Activated B cell treated with CpG ODN at 0.5 μM for 24 hours (primary cell): ENCODE measurements at regions of chr2 and their contacts with region 1.

Region 1: DNA sequence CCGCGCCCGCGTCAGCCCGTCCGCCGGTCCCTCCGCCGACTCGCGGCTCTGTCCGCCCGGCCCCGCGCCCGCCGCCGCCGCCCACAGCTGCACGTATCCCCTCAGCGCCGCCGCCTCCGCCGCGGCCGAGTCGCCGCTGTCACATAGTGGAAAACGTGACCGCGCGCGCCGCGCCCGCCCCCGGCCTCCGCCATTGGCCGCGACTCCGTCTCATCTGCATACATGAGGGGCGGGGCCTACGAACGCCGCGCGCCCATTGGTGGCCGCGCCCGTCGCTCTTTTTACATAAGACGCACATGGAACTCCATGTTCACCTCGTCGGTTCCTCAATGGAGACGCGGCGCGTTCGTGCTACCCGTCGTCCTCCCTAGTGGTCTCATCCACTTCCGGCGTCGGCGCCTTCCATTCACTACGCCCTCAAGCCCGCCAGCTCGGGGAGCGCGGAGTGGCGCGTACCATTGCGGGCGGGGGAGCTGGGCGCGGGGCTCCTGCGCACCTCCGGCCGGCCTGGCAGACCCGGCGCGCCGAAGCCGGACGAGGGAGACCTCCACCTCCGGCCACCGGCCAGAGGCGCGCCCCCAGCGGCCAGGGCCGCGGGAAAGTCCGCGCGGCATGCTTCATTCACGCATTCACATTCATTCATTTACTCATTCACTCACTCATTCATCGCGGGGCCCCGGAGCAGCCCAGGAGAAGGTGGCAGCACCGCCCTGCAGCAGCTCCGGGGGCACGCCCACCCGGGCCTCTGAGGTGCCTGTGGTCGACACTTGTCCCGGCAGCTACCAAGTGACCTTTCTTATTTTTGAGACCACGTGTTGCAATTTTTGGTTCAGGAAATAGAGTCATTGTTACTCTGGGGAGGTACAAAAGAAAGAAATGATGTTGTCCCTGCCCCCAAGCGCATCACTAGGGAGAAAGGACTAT is 502 bp upstream of the PER2 start:
- DNase-seq: peak; percentile 95
- ATAC-seq: peak; percentile 87
- H3K4me3 Mint-ChIP-seq: peak overlapping the region; percentile 93
- H3K27ac Mint-ChIP-seq: peak overlapping the region; percentile 94
- H3K4me1 Mint-ChIP-seq: peaks cover 34% of the 10 kb centered on the region
- H3K27me3 Mint-ChIP-seq: no peaks in the 10 kb centered on the region
- CTCF ChIP-seq: no peak

Region 2: GRCh38 chr2:237474931-237475703 is 813.8 kb before region 1 on chr2:
- CTCF ChIA-PET with region 1: no interaction called
- POLR2A ChIA-PET with region 1: interaction called, 4 read pairs
- intact Hi-C with region 1: loop called (anchors 1 kb)
- DNase-seq: peak; percentile 89
- ATAC-seq: peak; percentile 91
- H3K4me3 Mint-ChIP-seq: peak overlapping the region; percentile 87
- H3K27ac Mint-ChIP-seq: peak overlapping the region; percentile 84
- H3K4me1 Mint-ChIP-seq: peaks cover 8% of the 10 kb centered on the region
- H3K27me3 Mint-ChIP-seq: peaks cover 30% of the 10 kb centered on the region
- CTCF ChIP-seq: peak; percentile 27

Region 3: GRCh38 chr2:238097998-238098871 is 190.7 kb before region 1 on chr2:
- CTCF ChIA-PET with region 1: no interaction called
- POLR2A ChIA-PET with region 1: no interaction called
- intact Hi-C with region 1: loop called (anchors 2 kb)
- DNase-seq: no peak
- ATAC-seq: peak; percentile 98
- H3K4me3 Mint-ChIP-seq: peak overlapping the region; percentile 72
- H3K27ac Mint-ChIP-seq: peak overlapping the region; percentile 76
- H3K4me1 Mint-ChIP-seq: peaks cover 19% of the 10 kb centered on the region
- H3K27me3 Mint-ChIP-seq: no peaks in the 10 kb centered on the region
- CTCF ChIP-seq: no peak

Region 4: GRCh38 chr2:238239872-238240751 is 48.8 kb before region 1 on chr2 and contains the start of gene HES6:
- CTCF ChIA-PET with region 1: no interaction called
- POLR2A ChIA-PET with region 1: interaction called, 3 read pairs
- intact Hi-C with region 1: loop called (anchors 1 kb)
- DNase-seq: peak; percentile 77
- ATAC-seq: peak; percentile 86
- H3K4me3 Mint-ChIP-seq: peak within 1 kb of the TSS; percentile 86
- H3K27ac Mint-ChIP-seq: peak within 1 kb of the TSS; percentile 68
- H3K4me1 Mint-ChIP-seq: peaks cover 13% of the 10 kb centered on the region
- H3K27me3 Mint-ChIP-seq: peaks cover 12% of the 10 kb centered on the region
- CTCF ChIP-seq: no peak
- total RNA-seq, gene HES6: 4.4 and 5.0 TPM in 2 replicates

Region 5: DNA sequence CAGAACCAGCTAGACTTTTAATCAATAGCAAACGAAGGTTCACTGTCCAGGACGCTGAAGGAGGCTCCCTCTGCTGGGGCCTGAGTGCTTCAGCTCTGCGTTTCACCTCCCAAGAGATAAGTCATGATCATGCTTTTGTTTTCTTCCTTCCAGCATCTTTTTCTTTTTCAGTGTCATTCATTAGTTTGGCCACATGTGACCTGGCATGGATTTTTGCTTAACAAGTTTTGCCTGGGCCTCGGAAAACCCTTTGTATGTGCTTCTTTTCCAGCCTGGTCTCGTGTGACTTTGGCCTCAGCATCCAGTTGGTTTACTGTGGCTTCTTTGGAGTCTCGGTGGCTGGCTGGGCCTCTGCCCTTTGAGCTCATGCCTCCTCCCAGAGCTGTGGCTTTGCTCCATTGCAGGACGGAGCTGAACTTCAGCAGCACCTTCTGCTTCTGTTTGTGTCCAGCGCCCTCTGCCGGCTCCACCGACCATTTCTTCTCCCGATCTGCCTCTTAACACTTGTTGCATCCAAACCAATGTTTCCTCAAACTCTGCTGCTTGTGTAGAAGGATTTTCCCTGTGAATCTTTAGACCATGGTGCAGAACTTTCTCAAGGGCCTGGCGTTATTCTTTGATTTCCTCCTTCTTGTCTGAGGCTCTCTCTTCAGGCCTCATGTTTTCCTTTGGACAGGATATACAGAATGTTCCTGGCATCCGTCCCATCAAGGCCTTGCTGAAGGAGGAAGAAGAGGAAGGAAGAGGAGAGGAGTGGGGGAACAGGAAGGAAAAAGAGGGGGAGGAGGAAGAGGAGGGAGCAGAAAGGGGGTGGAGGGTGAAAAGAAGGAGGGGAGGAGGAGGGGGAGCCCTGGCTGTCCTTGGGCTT is 25.5 kb before region 1 on chr2:
- CTCF ChIA-PET with region 1: no interaction called
- POLR2A ChIA-PET with region 1: interaction called, 3 read pairs
- intact Hi-C with region 1: loop called (anchors 2 kb)
- DNase-seq: peak; percentile 53
- ATAC-seq: peak; percentile 57
- H3K4me3 Mint-ChIP-seq: no peak overlapping the region
- H3K27ac Mint-ChIP-seq: no peak overlapping the region
- H3K4me1 Mint-ChIP-seq: peaks cover 3% of the 10 kb centered on the region
- H3K27me3 Mint-ChIP-seq: no peaks in the 10 kb centered on the region
- CTCF ChIP-seq: peak; percentile 54

Region 6: GRCh38 chr2:238426568-238427434 is 137.9 kb after region 1 on chr2 and contains the start of gene ASB1:
- CTCF ChIA-PET with region 1: no interaction called
- POLR2A ChIA-PET with region 1: no interaction called
- intact Hi-C with region 1: loop called (anchors 1 kb)
- DNase-seq: peak; percentile 84
- ATAC-seq: peak; percentile 86
- H3K4me3 Mint-ChIP-seq: peak within 1 kb of the TSS; percentile 92
- H3K27ac Mint-ChIP-seq: peak within 1 kb of the TSS; percentile 94
- H3K4me1 Mint-ChIP-seq: peaks cover 39% of the 10 kb centered on the region
- H3K27me3 Mint-ChIP-seq: no peaks in the 10 kb centered on the region
- CTCF ChIP-seq: no peak
- total RNA-seq, gene ASB1: 44.5 and 49.8 TPM in 2 replicates

Region 7: DNA sequence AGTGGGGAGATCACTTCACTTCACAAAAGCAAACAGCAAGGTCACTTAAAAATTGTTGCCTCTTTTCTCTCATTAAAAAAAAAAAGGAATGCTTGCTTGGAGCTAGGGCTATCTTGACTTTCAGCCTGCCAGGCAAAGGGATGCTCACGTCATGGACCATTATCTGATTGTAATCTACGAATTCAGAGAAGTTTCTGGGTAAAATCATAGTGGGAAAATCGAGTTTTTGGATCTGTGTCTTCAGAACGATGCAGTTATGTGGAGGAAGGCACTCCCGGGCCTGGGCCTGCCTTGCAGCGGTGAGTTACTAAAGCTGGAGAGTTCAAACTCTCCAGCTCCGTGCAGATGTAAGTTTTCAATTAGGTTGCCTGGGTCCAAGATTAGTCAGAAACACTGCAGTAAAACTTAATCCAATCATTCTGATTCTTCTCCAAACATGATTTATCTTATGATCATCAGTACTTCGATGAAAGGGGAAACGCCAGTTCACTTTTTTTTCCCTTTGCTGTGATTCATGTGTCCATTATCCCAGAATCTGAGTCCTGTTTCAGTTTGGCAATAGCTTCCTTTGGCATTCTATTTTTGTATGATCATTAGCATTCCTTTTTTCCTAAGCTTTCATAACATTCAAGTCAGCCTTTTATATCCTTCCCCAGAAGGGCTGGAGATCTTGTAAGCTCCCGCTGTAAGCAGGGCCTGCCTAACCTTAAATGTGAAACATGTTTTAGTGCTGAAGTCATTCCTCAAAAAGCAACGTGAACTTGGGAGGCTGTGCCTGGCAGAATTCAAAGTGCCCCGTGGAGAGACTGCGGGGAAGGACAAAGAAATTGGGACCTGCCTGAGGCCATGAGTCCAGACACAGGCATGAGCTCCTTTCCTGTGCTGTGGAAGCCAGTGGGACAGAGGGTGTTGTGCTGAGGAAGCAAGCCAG is 439.7 kb after region 1 on chr2:
- CTCF ChIA-PET with region 1: no interaction called
- POLR2A ChIA-PET with region 1: no interaction called
- intact Hi-C with region 1: no loop called
- DNase-seq: no peak
- ATAC-seq: no peak
- H3K4me3 Mint-ChIP-seq: no peak overlapping the region
- H3K27ac Mint-ChIP-seq: no peak overlapping the region
- H3K4me1 Mint-ChIP-seq: no peaks in the 10 kb centered on the region
- H3K27me3 Mint-ChIP-seq: peaks cover 4% of the 10 kb centered on the region
- CTCF ChIP-seq: no peak